ENCODE measurements at regions of chr7 and their contacts with region 1.

Region 1: DNA sequence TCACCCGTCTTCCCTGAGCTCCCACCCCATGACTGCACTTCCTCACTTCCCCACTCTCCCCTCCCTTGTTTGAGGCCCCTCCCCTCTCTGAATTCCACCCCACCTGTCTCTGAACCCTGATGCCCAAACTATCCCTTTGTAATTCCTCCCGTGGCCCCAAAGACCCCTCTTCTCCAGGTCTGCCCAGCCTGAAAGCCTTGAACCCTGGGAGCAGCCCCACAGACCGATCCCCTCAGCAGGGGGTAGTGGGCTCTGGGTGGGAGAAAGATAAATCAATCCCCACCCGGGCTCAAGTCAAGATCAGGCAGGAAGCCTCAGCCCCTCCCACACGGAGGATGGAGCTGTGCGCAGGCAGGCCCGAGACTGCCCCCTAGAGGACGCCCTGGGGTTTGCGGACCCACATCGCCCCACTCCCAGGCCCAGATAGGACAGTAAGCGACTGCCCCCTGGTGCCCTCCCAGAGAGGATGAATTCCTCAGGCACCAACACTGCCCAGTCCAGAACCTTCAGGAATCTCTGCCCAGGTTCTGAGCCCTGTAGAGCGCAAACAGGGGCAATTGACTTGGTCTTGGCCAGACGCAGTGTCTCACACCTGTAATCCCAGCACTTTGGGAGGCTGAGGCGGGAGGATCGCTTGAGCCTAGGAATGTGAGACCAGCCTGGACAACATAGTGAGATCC is 11.7 kb downstream of the HSPB1 start:
- DNase-seq: peak; percentile 92 to 99 (median 96)
- ATAC-seq: peak; percentile 68
- H3K4me3 ChIP-seq: no peak overlapping the region
- H3K4me3 Mint-ChIP-seq: peak overlapping the region; percentile 26
- H3K27ac ChIP-seq: no peak overlapping the region
- H3K27ac Mint-ChIP-seq: peak overlapping the region; percentile 5
- H3K4me1 ChIP-seq: peaks cover 22% of the 10 kb centered on the region
- H3K4me1 Mint-ChIP-seq: peaks cover 27% of the 10 kb centered on the region
- H3K27me3 ChIP-seq: no peaks in the 10 kb centered on the region
- H3K27me3 Mint-ChIP-seq: no peaks in the 10 kb centered on the region
- CTCF ChIP-seq: peak; percentile 99

Region 2: GRCh38 chr7:75878769-75879611 is 435.2 kb before region 1 on chr7 and contains the start of gene RHBDD2:
- CTCF ChIA-PET with region 1: no interaction called
- POLR2A ChIA-PET with region 1: no interaction called
- intact Hi-C with region 1: loop called in 1 of 2 experiments (anchors 10 kb)
- DNase-seq: peak; percentile 95 to 99 (median 97)
- ATAC-seq: peak; percentile 87
- H3K4me3 ChIP-seq: peak within 1 kb of the TSS; percentile 96
- H3K4me3 Mint-ChIP-seq: peak within 1 kb of the TSS; percentile 92
- H3K27ac ChIP-seq: peak within 1 kb of the TSS; percentile 85 to 90
- H3K27ac Mint-ChIP-seq: peak within 1 kb of the TSS; percentile 90
- H3K4me1 ChIP-seq: peaks cover 31% of the 10 kb centered on the region
- H3K4me1 Mint-ChIP-seq: peaks cover 24% of the 10 kb centered on the region
- H3K27me3 ChIP-seq: no peaks in the 10 kb centered on the region
- H3K27me3 Mint-ChIP-seq: no peaks in the 10 kb centered on the region
- CTCF ChIP-seq: no peak
- total RNA-seq, gene RHBDD2: 199 to 208 TPM

Region 3: DNA sequence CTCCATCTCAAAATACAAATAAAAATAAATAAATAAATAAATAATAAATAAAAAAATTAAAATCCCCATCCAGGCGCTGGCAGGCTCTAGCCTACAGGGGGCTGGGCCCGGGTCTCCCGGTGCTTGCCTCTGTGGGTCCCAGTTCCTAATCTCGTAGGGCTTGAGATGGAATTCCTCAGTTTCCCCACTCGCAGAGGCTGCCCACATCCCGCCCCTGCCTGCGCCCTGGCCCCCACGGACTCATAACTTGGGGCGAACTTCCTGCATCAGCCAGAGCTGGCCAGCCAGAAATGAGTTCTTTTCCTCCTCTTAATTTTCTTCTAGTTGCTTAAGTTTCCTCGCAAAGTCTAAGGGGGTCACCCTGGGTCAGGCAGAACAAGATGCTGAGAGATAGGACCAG is 134.5 kb before region 1 on chr7:
- CTCF ChIA-PET with region 1: interaction called, 23 read pairs
- POLR2A ChIA-PET with region 1: interaction called, 6 read pairs
- intact Hi-C with region 1: loop called (anchors 1 kb)
- DNase-seq: no peak
- ATAC-seq: no peak
- H3K4me3 ChIP-seq: no peak overlapping the region
- H3K4me3 Mint-ChIP-seq: no peak overlapping the region
- H3K27ac ChIP-seq: no peak overlapping the region
- H3K27ac Mint-ChIP-seq: no peak overlapping the region
- H3K4me1 ChIP-seq: peaks cover 6% of the 10 kb centered on the region
- H3K4me1 Mint-ChIP-seq: no peaks in the 10 kb centered on the region
- H3K27me3 ChIP-seq: no peaks in the 10 kb centered on the region
- H3K27me3 Mint-ChIP-seq: no peaks in the 10 kb centered on the region
- CTCF ChIP-seq: no peak

Region 4: DNA sequence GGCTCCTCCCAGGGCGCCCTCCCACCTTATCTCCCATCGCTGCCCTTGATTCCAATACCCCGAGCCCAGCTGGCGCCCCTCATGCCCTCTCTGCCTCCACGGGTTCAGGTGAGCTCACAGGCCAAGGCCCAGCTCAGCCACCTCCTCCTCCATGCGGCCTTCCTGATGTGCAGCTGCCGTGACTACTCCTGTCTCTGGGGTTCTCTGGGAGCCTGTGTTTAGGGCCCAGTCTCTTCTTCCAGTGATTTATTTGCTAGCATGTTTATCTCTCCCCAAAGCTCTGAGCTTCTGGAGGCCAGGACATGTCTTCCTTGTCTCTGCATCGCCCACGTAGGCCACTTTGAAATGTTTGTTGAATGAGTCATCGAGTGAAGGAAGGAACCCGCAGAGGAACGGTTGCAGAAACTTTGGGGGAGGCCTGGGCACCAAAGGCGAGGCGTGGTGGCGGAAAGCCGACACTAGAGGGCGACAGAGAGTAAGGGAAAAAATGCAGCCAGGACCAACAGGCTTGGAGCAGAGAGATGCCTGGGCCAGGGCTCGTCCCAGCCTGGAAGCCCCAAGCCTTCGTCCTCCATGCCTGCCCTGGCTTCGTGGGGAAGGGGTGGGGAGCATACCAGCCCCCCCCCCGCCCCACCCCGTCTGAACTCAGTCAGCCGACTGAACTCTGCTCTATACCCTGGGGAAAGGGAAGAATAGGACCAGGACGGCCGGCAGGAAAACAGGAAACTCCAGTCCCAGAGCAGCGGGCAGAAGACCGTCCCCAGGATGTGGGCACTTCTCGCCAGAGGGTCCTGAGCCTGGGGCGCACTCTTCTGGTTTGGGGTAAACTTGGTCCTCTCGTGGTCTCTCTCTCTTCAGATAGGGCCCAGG is 22.6 kb before region 1 on chr7:
- CTCF ChIA-PET with region 1: interaction called, 44 read pairs
- POLR2A ChIA-PET with region 1: interaction called, 6 read pairs
- intact Hi-C with region 1: loop called (anchors 1 kb)
- DNase-seq: peak; percentile 65 to 92 (median 82)
- ATAC-seq: peak; percentile 92
- H3K4me3 ChIP-seq: no peak overlapping the region
- H3K4me3 Mint-ChIP-seq: no peak overlapping the region
- H3K27ac ChIP-seq: no peak overlapping the region
- H3K27ac Mint-ChIP-seq: no peak overlapping the region
- H3K4me1 ChIP-seq: peaks cover 12% of the 10 kb centered on the region
- H3K4me1 Mint-ChIP-seq: peaks cover 4% of the 10 kb centered on the region
- H3K27me3 ChIP-seq: no peaks in the 10 kb centered on the region
- H3K27me3 Mint-ChIP-seq: no peaks in the 10 kb centered on the region
- CTCF ChIP-seq: peak; percentile 92

Region 5: GRCh38 chr7:76327610-76328009 is 13.4 kb after region 1 on chr7:
- CTCF ChIA-PET with region 1: interaction called, 7 read pairs
- POLR2A ChIA-PET with region 1: interaction called, 15 read pairs
- intact Hi-C with region 1: no loop called
- DNase-seq: peak in 1 of 14 experiments; percentile 25
- ATAC-seq: no peak
- H3K4me3 ChIP-seq: no peak overlapping the region
- H3K4me3 Mint-ChIP-seq: no peak overlapping the region
- H3K27ac ChIP-seq: no peak overlapping the region
- H3K27ac Mint-ChIP-seq: peak overlapping the region; percentile 30
- H3K4me1 ChIP-seq: peaks cover 3% of the 10 kb centered on the region
- H3K4me1 Mint-ChIP-seq: peaks cover 46% of the 10 kb centered on the region
- H3K27me3 ChIP-seq: no peaks in the 10 kb centered on the region
- H3K27me3 Mint-ChIP-seq: no peaks in the 10 kb centered on the region
- CTCF ChIP-seq: no peak

Region 6: DNA sequence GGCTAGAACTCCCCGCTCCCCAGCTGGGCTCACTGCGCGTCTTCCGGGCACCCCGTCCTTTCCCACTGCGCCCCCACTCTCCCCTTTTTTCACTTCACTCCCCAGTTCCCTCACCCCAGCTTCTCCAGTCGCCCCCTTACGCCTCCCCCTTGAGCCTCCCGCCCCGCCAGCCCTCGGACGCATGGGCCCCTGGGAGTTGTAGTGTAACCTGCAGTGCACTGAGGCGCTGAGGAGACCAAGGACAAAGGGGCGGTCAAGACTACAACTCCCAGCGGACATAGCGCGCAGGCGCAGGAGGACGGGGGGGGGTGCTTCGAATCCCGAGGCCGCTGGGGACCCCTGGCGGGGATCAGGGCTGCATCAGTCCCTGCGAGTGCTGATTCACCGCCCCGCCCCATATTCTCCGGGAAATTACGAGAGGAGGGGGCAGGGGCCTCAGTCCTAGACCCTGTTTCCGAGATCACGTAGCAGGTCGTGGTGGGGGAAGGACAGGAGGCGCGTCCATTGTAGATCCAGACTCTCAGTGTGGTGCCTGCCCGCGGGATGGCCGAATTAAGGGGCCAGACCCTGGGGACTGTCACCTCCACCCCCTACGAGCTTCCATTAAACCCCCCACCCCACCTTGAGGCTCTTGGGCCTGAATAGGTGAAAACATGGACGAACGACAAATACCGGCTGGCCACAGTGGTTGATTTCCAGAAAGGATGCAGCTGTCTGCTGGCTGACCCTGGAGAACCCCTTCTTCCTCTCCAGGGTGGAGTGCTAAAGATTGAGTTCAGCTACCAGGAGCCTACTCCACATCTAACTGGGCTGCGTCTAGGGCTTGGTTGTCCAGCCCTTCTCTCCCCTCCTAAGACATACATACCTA is 45.2 kb after region 1 on chr7:
- CTCF ChIA-PET with region 1: interaction called, 14 read pairs
- POLR2A ChIA-PET with region 1: interaction called, 64 read pairs
- intact Hi-C with region 1: loop called (anchors 1 kb)
- DNase-seq: peak; percentile 88 to 99 (median 94)
- ATAC-seq: peak; percentile 90
- H3K4me3 ChIP-seq: peak overlapping the region; percentile 97
- H3K4me3 Mint-ChIP-seq: peak overlapping the region; percentile 96
- H3K27ac ChIP-seq: peak overlapping the region; percentile 93 to 96
- H3K27ac Mint-ChIP-seq: peak overlapping the region; percentile 90
- H3K4me1 ChIP-seq: peaks cover 29% of the 10 kb centered on the region
- H3K4me1 Mint-ChIP-seq: peaks cover 42% of the 10 kb centered on the region
- H3K27me3 ChIP-seq: no peaks in the 10 kb centered on the region
- H3K27me3 Mint-ChIP-seq: no peaks in the 10 kb centered on the region
- CTCF ChIP-seq: peak; percentile 70